PC-3 (cell line): ENCODE measurements at regions of chr18 and their contacts with region 1.

Region 1: GRCh38 chr18:56402872-56403516 is 235.4 kb downstream of the TXNL1 start:
- DNase-seq: peak; percentile 87
- ATAC-seq: peak; percentile 92
- H3K4me3 ChIP-seq: peak overlapping the region; percentile 24; the same call in 1 of the 2 replicates
- H3K27ac ChIP-seq: peak overlapping the region; percentile 75
- H3K4me1 ChIP-seq: peaks cover 20% of the 10 kb centered on the region
- H3K27me3 ChIP-seq: no peaks in the 10 kb centered on the region
- CTCF ChIP-seq: no peak

Region 2: GRCh38 chr18:56333839-56334238 is 69.2 kb before region 1 on chr18:
- CTCF ChIA-PET with region 1: no interaction called
- POLR2A ChIA-PET with region 1: no interaction called
- intact Hi-C with region 1: no loop called
- DNase-seq: peak; percentile 66
- ATAC-seq: no peak
- H3K4me3 ChIP-seq: no peak overlapping the region
- H3K27ac ChIP-seq: no peak overlapping the region
- H3K4me1 ChIP-seq: no peaks in the 10 kb centered on the region
- H3K27me3 ChIP-seq: no peaks in the 10 kb centered on the region
- CTCF ChIP-seq: no peak

Region 3: DNA sequence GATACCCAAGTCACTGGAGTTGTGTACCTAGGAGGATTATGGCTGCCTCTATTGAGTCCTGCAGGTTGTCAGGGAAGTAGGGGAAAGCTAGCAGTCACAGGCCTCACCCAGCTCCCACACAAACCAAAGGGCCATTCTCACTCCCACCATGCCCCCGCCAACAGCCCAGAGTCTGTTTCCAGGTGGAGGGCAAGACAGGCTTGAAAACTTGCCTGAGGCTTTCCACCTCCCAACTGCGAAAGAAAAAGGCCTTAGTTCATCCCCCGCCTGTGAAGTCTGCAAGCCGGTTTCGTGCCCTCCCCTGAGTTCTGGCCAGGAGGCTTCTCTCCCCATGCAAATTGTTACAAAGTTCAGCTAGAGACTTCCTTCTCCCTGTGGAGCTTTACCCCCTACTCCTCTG is 34.9 kb before region 1 on chr18:
- CTCF ChIA-PET with region 1: no interaction called
- POLR2A ChIA-PET with region 1: no interaction called
- intact Hi-C with region 1: loop called (anchors 2 kb)
- DNase-seq: no peak
- ATAC-seq: no peak
- H3K4me3 ChIP-seq: no peak overlapping the region
- H3K27ac ChIP-seq: no peak overlapping the region
- H3K4me1 ChIP-seq: no peaks in the 10 kb centered on the region; the same call in 1 of the 2 replicates
- H3K27me3 ChIP-seq: no peaks in the 10 kb centered on the region
- CTCF ChIP-seq: no peak

Region 4: DNA sequence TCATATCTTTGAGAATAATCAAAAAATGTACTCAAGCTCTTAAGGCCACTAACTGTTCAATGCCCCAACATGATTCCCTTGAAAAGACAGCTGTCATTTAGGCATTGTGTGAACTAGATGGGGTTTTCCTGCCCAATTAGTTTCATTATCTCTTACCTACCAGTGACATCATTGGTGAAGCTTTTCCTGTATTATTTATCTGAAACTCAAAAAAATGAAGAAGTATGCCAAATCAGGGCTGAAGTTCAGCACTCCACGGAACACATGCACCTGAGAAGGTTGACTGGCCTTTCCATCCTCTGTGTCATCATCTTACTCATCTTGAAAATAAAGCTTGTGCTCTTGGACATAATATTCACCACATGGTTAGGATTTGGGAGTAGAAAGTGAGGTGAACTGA is 109.0 kb after region 1 on chr18:
- CTCF ChIA-PET with region 1: no interaction called
- POLR2A ChIA-PET with region 1: no interaction called
- intact Hi-C with region 1: no loop called
- DNase-seq: peak; percentile 51
- ATAC-seq: 0 out of 2 replicates have a peak, but pooled peaks have one; percentile 27
- H3K4me3 ChIP-seq: no peak overlapping the region
- H3K27ac ChIP-seq: no peak overlapping the region
- H3K4me1 ChIP-seq: no peaks in the 10 kb centered on the region
- H3K27me3 ChIP-seq: no peaks in the 10 kb centered on the region
- CTCF ChIP-seq: no peak